HepG2 (cell line): ENCODE measurements at regions of chr12 and their contacts with region 1.

Region 1: GRCh38 chr12:113184900-113185773 is at the starts of genes DDX54 and RITA1:
- DNase-seq: peak; percentile 92
- ATAC-seq: peak; percentile 91
- H3K4me3 ChIP-seq: peak within 1 kb of the TSS; percentile 70 to 96 (median 86)
- H3K27ac ChIP-seq: peak within 1 kb of the TSS; percentile 93
- H3K4me1 ChIP-seq: peaks cover 34% of the 10 kb centered on the region
- H3K27me3 ChIP-seq: no peaks in the 10 kb centered on the region
- CTCF ChIP-seq: peak; percentile 19; the same call in 1 of the 2 replicates
- EP300 ChIP-seq: peak in 1 of 2 experiments; percentile 14; a peak in 1 of 4 replicates
- POLR2A ChIP-seq: peak; percentile 70 to 86; a peak in 3 of 4 replicates
- RAD21 ChIP-seq: no peak
- total RNA-seq, gene DDX54: 45.1 and 59.7 TPM in 2 replicates
- total RNA-seq, gene RITA1: 28.1 and 28.9 TPM in 2 replicates

Region 2: GRCh38 chr12:113174461-113175384 is 10.4 kb before region 1 on chr12:
- CTCF ChIA-PET with region 1: no interaction called
- POLR2A ChIA-PET with region 1: interaction called, 14 read pairs
- in situ Hi-C with region 1: no loop called
- intact Hi-C with region 1: no loop called
- DNase-seq: peak; percentile 33
- ATAC-seq: peak; percentile 87
- H3K4me3 ChIP-seq: no peak overlapping the region
- H3K27ac ChIP-seq: no peak overlapping the region
- H3K4me1 ChIP-seq: no peaks in the 10 kb centered on the region
- H3K27me3 ChIP-seq: no peaks in the 10 kb centered on the region
- CTCF ChIP-seq: peak; percentile 88
- EP300 ChIP-seq: no peak
- POLR2A ChIP-seq: no peak
- RAD21 ChIP-seq: 0 out of 2 replicates have a peak, but pooled peaks have one; percentile 37

Region 3: GRCh38 chr12:113208041-113208934 is 23.2 kb after region 1 on chr12:
- CTCF ChIA-PET with region 1: no interaction called
- POLR2A ChIA-PET with region 1: interaction called, 13 read pairs
- in situ Hi-C with region 1: no loop called
- intact Hi-C with region 1: no loop called
- DNase-seq: no peak
- ATAC-seq: peak; percentile 34; the same call in 2 of the 3 replicates
- H3K4me3 ChIP-seq: no peak overlapping the region
- H3K27ac ChIP-seq: no peak overlapping the region
- H3K4me1 ChIP-seq: peaks cover 49% of the 10 kb centered on the region
- H3K27me3 ChIP-seq: no peaks in the 10 kb centered on the region
- CTCF ChIP-seq: no peak
- EP300 ChIP-seq: no peak
- POLR2A ChIP-seq: no peak
- RAD21 ChIP-seq: no peak

Region 4: GRCh38 chr12:113366827-113367226 is 181.7 kb after region 1 on chr12:
- CTCF ChIA-PET with region 1: no interaction called
- POLR2A ChIA-PET with region 1: no interaction called
- in situ Hi-C with region 1: no loop called
- intact Hi-C with region 1: no loop called
- DNase-seq: no peak
- ATAC-seq: no peak
- H3K4me3 ChIP-seq: no peak overlapping the region
- H3K27ac ChIP-seq: no peak overlapping the region
- H3K4me1 ChIP-seq: no peaks in the 10 kb centered on the region
- H3K27me3 ChIP-seq: no peaks in the 10 kb centered on the region
- CTCF ChIP-seq: no peak
- EP300 ChIP-seq: no peak
- POLR2A ChIP-seq: no peak
- RAD21 ChIP-seq: no peak